Activated B cell treated with CpG ODN at 0.5 μM for 24 hours (primary cell): ENCODE measurements at regions of chrX and their contacts with region 1.

Region 1: GRCh38 chrX:107205770-107206696 is at the starts of genes DNAAF6 and NUP62CL:
- DNase-seq: peak; percentile 41
- ATAC-seq: peak; percentile 92
- H3K4me3 Mint-ChIP-seq: peak within 1 kb of the TSS; percentile 90
- H3K27ac Mint-ChIP-seq: peak within 1 kb of the TSS; percentile 53
- H3K4me1 Mint-ChIP-seq: peaks cover 8% of the 10 kb centered on the region
- H3K27me3 Mint-ChIP-seq: no peaks in the 10 kb centered on the region
- CTCF ChIP-seq: no peak
- total RNA-seq, gene DNAAF6: not detected in 2 replicates
- total RNA-seq, gene NUP62CL: 1.1 and 1.4 TPM in 2 replicates

Region 2: DNA sequence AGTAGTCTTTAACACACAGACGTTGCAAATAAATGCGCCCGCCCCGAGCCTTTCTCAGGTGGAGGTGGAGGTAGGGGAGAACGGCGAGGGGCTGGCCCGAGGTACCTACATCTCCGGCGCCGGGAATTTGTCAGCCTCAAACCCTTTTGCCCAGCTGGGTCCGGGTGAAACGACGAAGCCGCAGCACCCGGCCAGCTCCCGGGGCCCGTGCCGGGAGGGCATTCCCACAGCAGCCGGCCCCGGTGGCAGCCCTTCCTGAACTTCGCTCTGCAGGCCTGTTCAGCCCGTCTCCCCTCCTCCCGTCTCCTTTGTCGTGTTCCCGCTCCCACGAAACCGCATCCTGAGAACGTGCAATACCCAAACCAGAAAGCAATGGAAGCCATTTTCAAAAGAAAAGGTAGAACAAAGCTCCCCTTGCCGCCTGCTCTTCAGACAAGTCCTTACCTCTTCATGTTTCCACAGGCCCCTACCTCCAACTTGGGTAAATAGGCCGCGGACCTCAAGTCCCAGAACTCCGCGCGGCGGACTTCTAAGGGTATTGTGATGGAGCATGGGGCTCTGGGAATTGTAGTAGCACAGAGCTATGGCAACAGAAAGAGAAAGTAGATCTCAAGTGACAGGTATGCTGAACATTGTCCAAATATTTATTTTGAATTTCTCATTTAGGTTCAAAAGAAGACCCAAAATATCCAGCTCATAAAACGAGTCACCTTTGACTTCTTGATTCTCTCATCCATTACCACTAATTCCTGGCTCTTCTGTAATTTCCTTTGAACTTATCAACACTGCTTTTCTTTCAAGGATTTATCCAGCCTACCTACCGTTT is 87.5 kb before region 1 on chrX and contains the start of gene RBM41:
- CTCF ChIA-PET with region 1: no interaction called
- POLR2A ChIA-PET with region 1: no interaction called
- intact Hi-C with region 1: loop called (anchors 2 kb)
- DNase-seq: peak; percentile 39
- ATAC-seq: peak; percentile 99
- H3K4me3 Mint-ChIP-seq: peak within 1 kb of the TSS; percentile 100
- H3K27ac Mint-ChIP-seq: peak within 1 kb of the TSS; percentile 96
- H3K4me1 Mint-ChIP-seq: peaks cover 26% of the 10 kb centered on the region
- H3K27me3 Mint-ChIP-seq: no peaks in the 10 kb centered on the region
- CTCF ChIP-seq: no peak
- total RNA-seq, gene RBM41: 16.5 and 18.5 TPM in 2 replicates